Activated T-helper 1 cell treated with anti-CD3 and anti-CD28 coated beads, Interleukin-12 subunit alpha, Interleukin-12 subunit beta, Interleukin-2, Interleukin-4 antibody, amounts not matched to agents 30 ng/mL and 10 ng/mL and 1 ng/mL, durations not matched to agents 14 hours and 24 hours and 36 hours (primary cell): ENCODE measurements at regions of chr10 and their contacts with region 1.

Region 1: DNA sequence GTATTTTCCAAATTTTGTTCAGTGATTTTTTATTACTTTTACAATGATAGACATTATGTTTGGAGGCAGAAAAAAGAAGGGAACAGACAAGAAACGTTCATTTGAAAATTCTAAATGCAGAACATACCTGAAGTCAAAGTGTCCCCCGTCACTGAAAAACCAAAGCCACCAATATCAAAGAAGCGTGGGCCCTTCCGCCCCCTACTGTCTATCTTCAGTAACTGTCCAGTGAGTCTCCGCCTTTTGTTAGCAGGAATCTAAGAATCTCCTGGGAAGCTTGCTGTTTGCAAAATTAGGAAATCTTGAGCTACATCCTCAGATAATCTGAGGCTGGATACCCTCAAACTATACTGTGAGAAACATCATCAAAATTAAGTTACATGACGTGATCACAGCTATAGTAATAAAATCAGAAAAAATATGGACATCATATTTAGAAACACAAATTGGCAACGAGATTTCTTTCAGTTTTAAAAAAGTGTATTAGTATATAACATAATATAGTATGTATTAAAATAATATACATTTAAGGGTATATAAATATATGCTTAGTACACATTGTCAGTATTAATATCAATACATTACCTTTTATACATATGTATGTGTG is 169.3 kb upstream of the AKR1E2 start:
- DNase-seq: no peak
- H3K4me3 Mint-ChIP-seq: no peak overlapping the region
- H3K27ac Mint-ChIP-seq: no peak overlapping the region
- H3K4me1 Mint-ChIP-seq: peaks cover 10% of the 10 kb centered on the region
- H3K27me3 Mint-ChIP-seq: peaks cover 18% of the 10 kb centered on the region

Region 2: GRCh38 chr10:3197348-3198003 is 1459.2 kb before region 1 on chr10:
- intact Hi-C with region 1: loop called (anchors 1 kb)
- DNase-seq: peak; percentile 76
- H3K4me3 Mint-ChIP-seq: peak overlapping the region; percentile 37
- H3K27ac Mint-ChIP-seq: peak overlapping the region; percentile 57
- H3K4me1 Mint-ChIP-seq: peaks cover 24% of the 10 kb centered on the region
- H3K27me3 Mint-ChIP-seq: peaks cover 82% of the 10 kb centered on the region

Region 3: DNA sequence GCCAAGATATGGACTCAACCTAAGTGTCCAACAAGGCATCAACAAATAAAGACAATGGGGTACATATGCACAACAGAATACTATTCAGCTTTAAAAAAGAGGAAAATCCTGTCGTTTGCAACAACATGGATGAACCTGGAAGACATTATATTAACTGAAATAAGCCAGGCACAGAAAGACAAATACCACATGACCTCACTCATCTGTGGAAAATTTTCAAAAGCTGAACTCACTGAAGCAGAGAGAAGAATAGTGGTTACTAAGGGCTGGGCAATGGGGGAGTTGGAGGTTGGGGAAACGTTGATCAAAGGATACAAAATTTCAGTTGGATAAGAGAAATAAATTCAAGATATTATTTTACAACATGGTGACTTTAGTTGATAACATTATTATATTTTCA is 1262.7 kb before region 1 on chr10:
- intact Hi-C with region 1: loop called (anchors 5 kb)
- DNase-seq: no peak
- H3K4me3 Mint-ChIP-seq: no peak overlapping the region
- H3K27ac Mint-ChIP-seq: no peak overlapping the region
- H3K4me1 Mint-ChIP-seq: no peaks in the 10 kb centered on the region
- H3K27me3 Mint-ChIP-seq: peaks cover 26% of the 10 kb centered on the region

Region 4: GRCh38 chr10:3805791-3806461 is 850.8 kb before region 1 on chr10:
- intact Hi-C with region 1: loop called (anchors 1 kb)
- DNase-seq: no peak
- H3K4me3 Mint-ChIP-seq: peak overlapping the region; percentile 70
- H3K27ac Mint-ChIP-seq: peak overlapping the region; percentile 99
- H3K4me1 Mint-ChIP-seq: peaks cover 76% of the 10 kb centered on the region
- H3K27me3 Mint-ChIP-seq: no peaks in the 10 kb centered on the region

Region 5: DNA sequence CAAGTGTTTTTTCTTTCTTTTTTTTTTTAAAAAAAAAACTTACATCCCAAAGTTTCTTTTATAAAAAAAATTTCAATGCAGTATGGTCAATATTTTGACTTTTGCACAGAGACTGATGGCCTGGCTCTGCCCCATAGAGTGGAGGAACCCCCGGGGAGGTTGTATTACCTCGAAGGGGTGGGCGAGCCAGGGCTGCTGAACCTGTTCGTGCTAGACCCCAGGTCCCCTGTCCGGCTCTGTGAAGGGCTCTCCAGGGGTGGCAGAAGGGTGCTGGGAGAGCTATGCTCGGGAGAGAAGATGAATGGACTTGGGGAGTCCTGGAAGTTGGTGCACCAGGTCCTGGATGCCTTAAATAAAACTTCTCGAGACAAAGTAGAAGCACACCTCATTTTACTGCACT is 425.2 kb before region 1 on chr10:
- intact Hi-C with region 1: no loop called
- DNase-seq: no peak
- H3K4me3 Mint-ChIP-seq: no peak overlapping the region
- H3K27ac Mint-ChIP-seq: no peak overlapping the region
- H3K4me1 Mint-ChIP-seq: peaks cover 4% of the 10 kb centered on the region
- H3K27me3 Mint-ChIP-seq: peaks cover 9% of the 10 kb centered on the region

Region 6: DNA sequence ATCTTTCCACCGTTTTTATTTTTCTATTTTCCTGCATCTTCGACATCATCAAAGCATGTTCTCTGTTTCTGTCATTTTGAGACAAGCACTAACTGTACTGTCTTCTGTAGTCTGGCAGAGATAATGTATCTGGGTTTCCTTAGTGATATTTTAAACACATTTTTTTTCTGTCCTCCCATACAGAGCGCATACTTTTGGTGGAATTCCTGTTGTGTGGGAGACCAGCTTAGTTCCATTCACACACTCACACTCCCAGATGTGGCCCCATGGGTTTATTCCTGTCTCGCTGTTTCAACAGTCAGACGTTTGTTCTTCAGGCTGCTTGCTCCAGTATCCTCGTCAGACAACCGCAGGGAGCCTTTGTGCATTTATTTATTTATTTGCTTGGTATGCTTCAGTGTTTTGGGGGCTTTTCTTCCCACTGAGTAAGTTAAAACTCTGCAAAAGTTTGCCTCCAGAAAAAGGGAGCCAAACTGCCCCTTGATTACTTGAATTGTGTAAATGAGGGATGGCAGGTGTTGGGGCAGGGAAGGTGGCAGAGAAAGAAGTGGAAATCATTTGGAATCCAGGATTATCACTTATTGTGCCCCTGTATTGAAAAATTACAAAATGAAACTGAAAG is 414.8 kb before region 1 on chr10:
- intact Hi-C with region 1: loop called (anchors 10 kb)
- DNase-seq: no peak
- H3K4me3 Mint-ChIP-seq: no peak overlapping the region
- H3K27ac Mint-ChIP-seq: no peak overlapping the region
- H3K4me1 Mint-ChIP-seq: peaks cover 43% of the 10 kb centered on the region
- H3K27me3 Mint-ChIP-seq: peaks cover 2% of the 10 kb centered on the region

Region 7: GRCh38 chr10:4488904-4489303 is 167.8 kb before region 1 on chr10:
- intact Hi-C with region 1: no loop called
- DNase-seq: no peak
- H3K4me3 Mint-ChIP-seq: no peak overlapping the region
- H3K27ac Mint-ChIP-seq: no peak overlapping the region
- H3K4me1 Mint-ChIP-seq: no peaks in the 10 kb centered on the region
- H3K27me3 Mint-ChIP-seq: peaks cover 18% of the 10 kb centered on the region

Region 8: GRCh38 chr10:4635388-4635787 is 21.3 kb before region 1 on chr10:
- intact Hi-C with region 1: no loop called
- DNase-seq: no peak
- H3K4me3 Mint-ChIP-seq: no peak overlapping the region
- H3K27ac Mint-ChIP-seq: no peak overlapping the region
- H3K4me1 Mint-ChIP-seq: no peaks in the 10 kb centered on the region
- H3K27me3 Mint-ChIP-seq: peaks cover 2% of the 10 kb centered on the region

Region 9: GRCh38 chr10:4686644-4686996 is 29.9 kb after region 1 on chr10:
- intact Hi-C with region 1: loop called (anchors 1 kb)
- DNase-seq: no peak
- H3K4me3 Mint-ChIP-seq: no peak overlapping the region
- H3K27ac Mint-ChIP-seq: peak overlapping the region; percentile 80
- H3K4me1 Mint-ChIP-seq: peaks cover 20% of the 10 kb centered on the region
- H3K27me3 Mint-ChIP-seq: peaks cover 7% of the 10 kb centered on the region